CD8-positive, alpha-beta T cell (primary cell): ENCODE measurements at regions of chr2 and their contacts with region 1.

Region 1: GRCh38 chr2:119759451-119760236 is at the start of gene PTPN4:
- DNase-seq: peak; percentile 91 to 99 (median 95)
- ATAC-seq: peak; percentile 90
- H3K4me3 ChIP-seq: peak within 1 kb of the TSS; percentile 83
- H3K4me3 Mint-ChIP-seq: peak within 1 kb of the TSS; percentile 95
- H3K27ac ChIP-seq: peak within 1 kb of the TSS; percentile 77 to 79
- H3K27ac Mint-ChIP-seq: peak within 1 kb of the TSS; percentile 96
- H3K4me1 ChIP-seq: peaks cover 31% of the 10 kb centered on the region
- H3K4me1 Mint-ChIP-seq: peaks cover 42% of the 10 kb centered on the region
- H3K27me3 ChIP-seq: no peaks in the 10 kb centered on the region
- H3K27me3 Mint-ChIP-seq: no peaks in the 10 kb centered on the region
- CTCF ChIP-seq: no peak
- total RNA-seq, gene PTPN4: 104 to 105 TPM

Region 2: DNA sequence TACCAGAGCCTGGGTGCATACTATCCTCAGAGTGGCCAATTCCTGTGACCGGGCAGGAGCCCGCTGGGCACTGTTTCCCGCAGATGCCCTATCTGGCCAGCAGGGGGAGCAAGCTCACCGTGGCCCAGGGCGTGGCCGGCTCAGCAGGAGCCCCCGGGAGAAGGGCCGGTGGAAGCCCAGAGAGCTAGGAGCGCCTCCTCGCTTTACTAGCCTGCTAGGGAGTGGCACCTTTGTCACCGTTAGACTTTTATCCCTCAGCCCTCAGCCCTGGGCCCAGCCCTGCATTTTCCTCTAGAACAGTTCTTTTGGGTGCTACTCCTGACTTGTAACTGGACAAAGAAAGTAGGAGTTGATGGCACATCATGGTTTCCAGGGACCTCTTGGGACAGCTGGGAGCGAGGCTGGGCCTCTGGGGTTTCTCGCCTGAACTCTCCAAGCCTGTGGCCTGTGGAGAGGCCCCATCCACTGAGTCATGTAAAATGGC is 56.7 kb before region 1 on chr2:
- CTCF ChIA-PET with region 1: interaction called, 3 read pairs
- POLR2A ChIA-PET with region 1: no interaction called
- intact Hi-C with region 1: loop called in 1 of 2 experiments (anchors 5 kb)
- DNase-seq: peak; percentile 27 to 80 (median 71)
- ATAC-seq: peak; percentile 87
- H3K4me3 ChIP-seq: no peak overlapping the region
- H3K4me3 Mint-ChIP-seq: no peak overlapping the region
- H3K27ac ChIP-seq: no peak overlapping the region
- H3K27ac Mint-ChIP-seq: no peak overlapping the region
- H3K4me1 ChIP-seq: peaks cover 12% of the 10 kb centered on the region
- H3K4me1 Mint-ChIP-seq: peaks cover 12% of the 10 kb centered on the region
- H3K27me3 ChIP-seq: peaks cover 0 to 2% of the 10 kb centered on the region in 2 experiments
- H3K27me3 Mint-ChIP-seq: no peaks in the 10 kb centered on the region
- CTCF ChIP-seq: peak; percentile 92

Region 3: GRCh38 chr2:119801040-119801439 is 41.4 kb after region 1 on chr2:
- CTCF ChIA-PET with region 1: no interaction called
- POLR2A ChIA-PET with region 1: interaction called, 3 read pairs
- intact Hi-C with region 1: loop called (anchors 5 kb)
- DNase-seq: no peak
- ATAC-seq: no peak
- H3K4me3 ChIP-seq: no peak overlapping the region
- H3K4me3 Mint-ChIP-seq: no peak overlapping the region
- H3K27ac ChIP-seq: no peak overlapping the region
- H3K27ac Mint-ChIP-seq: no peak overlapping the region
- H3K4me1 ChIP-seq: peaks cover 3% of the 10 kb centered on the region
- H3K4me1 Mint-ChIP-seq: peaks cover 79% of the 10 kb centered on the region
- H3K27me3 ChIP-seq: no peaks in the 10 kb centered on the region
- H3K27me3 Mint-ChIP-seq: no peaks in the 10 kb centered on the region
- CTCF ChIP-seq: no peak

Region 4: DNA sequence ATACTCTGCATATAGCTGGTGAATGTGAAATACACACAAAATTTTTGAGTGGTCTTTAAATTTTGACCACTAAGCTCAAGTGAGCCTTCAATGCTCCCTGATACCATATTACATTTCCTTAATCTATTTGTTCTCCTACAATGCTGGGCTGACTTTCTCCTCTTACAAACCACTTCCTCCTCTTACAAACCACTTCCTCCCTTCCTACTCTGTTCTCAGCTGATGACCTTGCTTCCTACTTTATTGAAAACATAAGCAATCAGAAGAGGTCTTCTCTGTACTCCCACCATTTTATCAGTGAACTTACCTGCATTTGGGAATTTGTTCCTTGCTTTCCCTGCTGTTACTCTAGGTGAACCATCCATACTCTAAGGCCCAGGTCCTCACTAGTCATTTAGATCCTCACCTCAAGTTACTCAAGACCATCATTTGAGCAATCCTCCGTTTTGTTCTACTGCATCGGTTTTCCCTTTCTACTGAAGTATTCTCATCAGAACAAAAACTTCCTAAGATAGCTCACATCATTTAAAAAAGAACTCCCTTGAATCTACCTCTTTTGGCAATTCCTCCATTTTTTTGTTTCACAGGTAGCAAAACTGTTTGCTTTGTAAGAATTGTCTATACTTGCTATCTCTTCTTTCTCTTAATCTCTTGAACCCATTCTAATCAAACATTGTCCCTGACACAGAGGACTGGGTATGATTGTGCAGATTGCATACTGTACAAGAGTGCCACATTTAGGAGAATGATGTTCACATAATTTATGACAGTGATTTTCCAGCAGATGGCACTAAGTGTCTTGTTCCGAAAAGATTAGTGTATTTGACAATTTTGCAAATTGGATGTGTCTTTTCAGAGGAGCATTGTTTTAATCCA is 349.8 kb after region 1 on chr2:
- CTCF ChIA-PET with region 1: no interaction called
- POLR2A ChIA-PET with region 1: no interaction called
- intact Hi-C with region 1: loop called in 1 of 2 experiments (anchors 2 kb)
- DNase-seq: peak in 2 of 9 experiments; percentile 37 to 68
- ATAC-seq: peak; percentile 73
- H3K4me3 ChIP-seq: peak overlapping the region in 1 of 2 experiments; percentile 12
- H3K4me3 Mint-ChIP-seq: peak overlapping the region; percentile 72
- H3K27ac ChIP-seq: peak overlapping the region; percentile 1 to 33
- H3K27ac Mint-ChIP-seq: peak overlapping the region; percentile 81
- H3K4me1 ChIP-seq: peaks cover 21% of the 10 kb centered on the region
- H3K4me1 Mint-ChIP-seq: peaks cover 30% of the 10 kb centered on the region
- H3K27me3 ChIP-seq: no peaks in the 10 kb centered on the region
- H3K27me3 Mint-ChIP-seq: no peaks in the 10 kb centered on the region
- CTCF ChIP-seq: peak; percentile 66

Region 5: DNA sequence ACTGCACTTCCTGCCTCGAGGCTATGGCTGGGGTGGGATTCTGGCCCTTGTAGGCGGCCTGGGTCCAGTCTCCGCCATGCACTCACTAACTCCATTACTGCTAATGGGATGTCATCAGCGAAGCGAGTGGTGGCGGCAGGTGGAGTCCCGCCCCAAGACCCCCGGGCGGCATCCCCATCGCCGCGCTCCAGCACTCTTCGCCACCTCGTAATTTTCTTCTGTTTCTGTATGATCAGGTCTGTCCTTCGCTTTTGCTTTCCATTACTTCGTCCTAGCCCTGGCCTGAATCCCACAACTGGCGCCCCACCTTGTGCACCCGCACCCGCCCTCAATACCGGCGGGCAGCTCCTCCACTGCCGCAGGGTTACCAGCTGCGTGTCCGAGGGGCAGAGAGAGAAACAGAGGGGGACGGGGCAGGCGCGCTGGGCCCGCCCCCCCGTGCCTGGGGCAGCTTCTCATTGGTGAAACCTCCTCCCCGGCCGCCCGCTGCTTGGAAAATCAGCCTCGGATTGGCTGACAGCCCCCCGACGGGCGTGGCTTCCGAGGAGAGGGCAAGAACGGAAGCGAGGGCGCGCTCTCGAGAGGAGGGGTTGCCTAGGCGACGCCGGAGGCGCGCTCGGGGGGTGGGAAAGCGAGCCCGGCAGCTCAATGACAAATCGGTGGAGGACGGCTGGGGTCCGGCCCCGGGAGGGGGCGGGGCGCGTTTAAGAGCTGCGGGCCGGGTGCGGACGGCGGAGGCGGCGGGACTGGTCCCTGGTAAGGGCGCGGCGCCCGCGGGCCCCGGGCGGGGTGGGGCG is 492.8 kb after region 1 on chr2 and contains the start of gene RALB:
- CTCF ChIA-PET with region 1: no interaction called
- POLR2A ChIA-PET with region 1: no interaction called
- intact Hi-C with region 1: loop called (anchors 1 kb)
- DNase-seq: peak; percentile 96 to 99 (median 98)
- ATAC-seq: peak; percentile 95
- H3K4me3 ChIP-seq: peak within 1 kb of the TSS; percentile 87 to 100
- H3K4me3 Mint-ChIP-seq: peak within 1 kb of the TSS; percentile 99
- H3K27ac ChIP-seq: peak within 1 kb of the TSS; percentile 63 to 85
- H3K27ac Mint-ChIP-seq: peak within 1 kb of the TSS; percentile 94
- H3K4me1 ChIP-seq: peaks cover 18% of the 10 kb centered on the region
- H3K4me1 Mint-ChIP-seq: peaks cover 34% of the 10 kb centered on the region
- H3K27me3 ChIP-seq: no peaks in the 10 kb centered on the region
- H3K27me3 Mint-ChIP-seq: peaks cover 5% of the 10 kb centered on the region
- CTCF ChIP-seq: no peak
- total RNA-seq, gene RALB: 3.1 to 3.2 TPM